K562 (cell line): ENCODE measurements at regions of chr10 and their contacts with region 1.

Region 1: DNA sequence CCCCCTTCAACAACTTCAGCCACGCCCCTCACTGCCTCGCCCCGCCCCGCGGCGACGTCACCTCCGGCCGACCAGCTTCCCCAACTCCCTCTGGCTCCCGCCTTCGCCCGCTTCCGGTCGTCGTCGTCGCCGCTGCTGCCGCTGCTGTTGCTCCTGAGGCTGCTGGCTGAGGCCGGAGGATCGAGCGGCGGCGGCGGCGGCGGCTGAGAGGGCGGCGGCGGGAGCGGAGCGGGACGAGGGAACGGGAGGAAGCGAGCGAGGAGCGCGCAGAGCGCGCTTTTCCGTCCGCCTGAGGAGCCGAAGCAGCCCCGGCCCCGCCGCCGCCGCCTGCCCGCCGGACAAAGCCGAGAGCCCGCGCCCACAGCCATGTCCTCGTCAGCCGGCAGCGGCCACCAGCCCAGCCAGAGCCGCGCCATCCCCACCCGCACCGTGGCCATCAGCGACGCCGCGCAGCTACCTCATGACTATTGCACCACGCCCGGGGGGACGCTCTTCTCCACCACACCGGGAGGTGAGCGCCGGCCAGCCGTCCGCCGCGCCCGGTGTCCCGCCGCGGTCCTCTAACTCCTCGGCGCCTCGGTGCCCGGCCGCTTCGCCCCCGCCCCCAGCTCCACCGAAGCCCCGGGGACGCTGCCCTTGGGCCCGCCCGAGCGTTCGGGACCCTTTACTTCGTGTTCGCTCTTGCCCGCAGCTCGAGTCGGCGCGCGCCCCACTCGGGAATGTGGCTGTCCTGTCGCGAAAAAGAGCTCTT is at the start of gene EIF4EBP2:
- DNase-seq: peak; percentile 95 to 99 (median 96)
- ATAC-seq: peak; percentile 61
- H3K4me3 ChIP-seq: peak within 1 kb of the TSS; percentile 89
- H3K27ac ChIP-seq: peak within 1 kb of the TSS; percentile 84
- H3K4me1 ChIP-seq: peaks cover 30 to 31% of the 10 kb centered on the region in 2 experiments
- H3K27me3 ChIP-seq: no peaks in the 10 kb centered on the region
- CTCF ChIP-seq: no peak
- EP300 ChIP-seq: no peak
- POLR2A ChIP-seq: peak; percentile 92
- RAD21 ChIP-seq: no peak
- polyA plus RNA-seq, gene EIF4EBP2: 16.1 to 25.5 TPM

Region 2: GRCh38 chr10:70381471-70382421 is 22.5 kb before region 1 on chr10:
- CTCF ChIA-PET with region 1: no interaction called
- POLR2A ChIA-PET with region 1: interaction called, 11 read pairs
- in situ Hi-C with region 1: no loop called
- intact Hi-C with region 1: loop called (anchors 2 kb)
- DNase-seq: peak; percentile 45 to 72 (median 59)
- ATAC-seq: peak; percentile 51
- H3K4me3 ChIP-seq: peak overlapping the region; percentile 66
- H3K27ac ChIP-seq: peak overlapping the region; percentile 31; the same call in 2 of the 3 replicates
- H3K4me1 ChIP-seq: peaks cover 12 to 22% of the 10 kb centered on the region in 2 experiments; a peak in 4 of 5 replicates
- H3K27me3 ChIP-seq: no peaks in the 10 kb centered on the region
- CTCF ChIP-seq: no peak
- EP300 ChIP-seq: no peak
- POLR2A ChIP-seq: no peak
- RAD21 ChIP-seq: peak in 1 of 2 experiments; percentile 8; a peak in 1 of 4 replicates

Region 3: DNA sequence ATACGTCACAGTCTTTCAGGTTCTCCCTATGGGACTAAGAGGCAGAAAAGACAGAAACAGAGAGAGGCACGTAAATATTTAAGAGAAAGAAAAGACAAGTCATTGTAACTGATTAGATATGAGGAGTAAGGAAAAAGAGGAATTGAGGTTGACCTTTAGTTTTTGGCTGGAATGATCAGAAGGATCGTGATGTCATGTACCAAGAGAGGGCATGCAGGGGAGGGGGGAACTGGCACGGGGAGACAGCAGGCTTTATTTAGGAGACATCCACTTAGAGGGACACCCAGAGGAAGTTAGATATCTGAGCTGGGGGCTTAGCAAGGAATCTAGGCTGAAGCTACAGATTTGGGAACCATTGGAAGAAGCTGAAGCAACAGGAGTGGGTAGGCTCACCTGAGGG is 12.6 kb before region 1 on chr10:
- CTCF ChIA-PET with region 1: no interaction called
- POLR2A ChIA-PET with region 1: interaction called, 12 read pairs
- in situ Hi-C with region 1: no loop called
- intact Hi-C with region 1: no loop called
- DNase-seq: no peak
- ATAC-seq: no peak
- H3K4me3 ChIP-seq: no peak overlapping the region
- H3K27ac ChIP-seq: no peak overlapping the region
- H3K4me1 ChIP-seq: peaks cover 3 to 7% of the 10 kb centered on the region in 2 experiments; a peak in 2 of 5 replicates
- H3K27me3 ChIP-seq: no peaks in the 10 kb centered on the region
- CTCF ChIP-seq: no peak
- EP300 ChIP-seq: no peak
- POLR2A ChIP-seq: no peak
- RAD21 ChIP-seq: no peak

Region 4: GRCh38 chr10:70418229-70418628 is 14.0 kb after region 1 on chr10:
- CTCF ChIA-PET with region 1: no interaction called
- POLR2A ChIA-PET with region 1: interaction called, 27 read pairs
- in situ Hi-C with region 1: no loop called
- intact Hi-C with region 1: no loop called
- DNase-seq: no peak
- ATAC-seq: peak; percentile 54; the same call in 2 of the 3 replicates
- H3K4me3 ChIP-seq: no peak overlapping the region
- H3K27ac ChIP-seq: no peak overlapping the region
- H3K4me1 ChIP-seq: no peaks in the 10 kb centered on the region
- H3K27me3 ChIP-seq: no peaks in the 10 kb centered on the region
- CTCF ChIP-seq: no peak
- EP300 ChIP-seq: no peak
- POLR2A ChIP-seq: no peak
- RAD21 ChIP-seq: no peak

Region 5: GRCh38 chr10:70425096-70425495 is 20.9 kb after region 1 on chr10:
- CTCF ChIA-PET with region 1: no interaction called
- POLR2A ChIA-PET with region 1: interaction called, 14 read pairs
- in situ Hi-C with region 1: no loop called
- intact Hi-C with region 1: no loop called
- DNase-seq: no peak
- ATAC-seq: no peak
- H3K4me3 ChIP-seq: no peak overlapping the region
- H3K27ac ChIP-seq: no peak overlapping the region
- H3K4me1 ChIP-seq: no peaks in the 10 kb centered on the region
- H3K27me3 ChIP-seq: no peaks in the 10 kb centered on the region
- CTCF ChIP-seq: no peak
- EP300 ChIP-seq: no peak
- POLR2A ChIP-seq: no peak
- RAD21 ChIP-seq: no peak

Region 6: GRCh38 chr10:70656489-70656888 is 252.3 kb after region 1 on chr10:
- CTCF ChIA-PET with region 1: no interaction called
- POLR2A ChIA-PET with region 1: no interaction called
- in situ Hi-C with region 1: no loop called
- intact Hi-C with region 1: no loop called
- DNase-seq: peak; percentile 72 to 82 (median 74)
- ATAC-seq: peak; percentile 70
- H3K4me3 ChIP-seq: no peak overlapping the region
- H3K27ac ChIP-seq: no peak overlapping the region; the same call in 2 of the 3 replicates
- H3K4me1 ChIP-seq: peaks cover 12 to 33% of the 10 kb centered on the region in 2 experiments
- H3K27me3 ChIP-seq: no peaks in the 10 kb centered on the region
- CTCF ChIP-seq: no peak
- EP300 ChIP-seq: peak; percentile 39; the same call in 1 of the 2 replicates
- POLR2A ChIP-seq: no peak
- RAD21 ChIP-seq: no peak